Calu3 (cell line): ENCODE measurements at regions of chr5 and their contacts with region 1.

Region 1: DNA sequence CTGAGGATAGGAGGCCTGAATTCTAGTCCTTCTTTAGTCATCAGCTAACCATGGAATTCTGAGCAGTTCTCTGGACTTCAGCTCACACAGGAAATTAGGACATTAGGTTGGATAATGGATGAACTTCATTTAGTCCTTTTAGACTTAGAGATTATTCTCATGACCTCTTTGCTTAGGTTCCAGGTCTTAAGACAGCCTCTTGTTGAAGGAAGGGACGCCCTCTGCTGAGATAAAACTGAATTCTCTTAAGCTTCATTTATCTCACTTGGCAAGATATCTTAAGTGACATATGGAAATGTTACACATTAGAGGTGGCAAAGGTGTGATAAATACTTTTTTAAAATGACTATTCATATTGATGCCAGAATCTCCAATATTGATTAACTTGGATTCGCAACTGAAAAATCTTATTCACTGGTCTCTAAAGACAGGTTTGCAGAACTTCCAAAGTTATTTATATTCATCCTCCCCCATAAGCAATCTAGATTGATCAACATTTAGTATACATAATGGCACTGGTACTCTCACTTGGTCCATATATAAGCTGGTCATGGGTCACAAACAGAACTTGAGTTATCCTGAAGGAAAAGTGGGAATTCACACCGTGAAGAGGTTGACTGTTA is 16.9 kb upstream of the ZNF366 start:
- DNase-seq: peak; percentile 13
- H3K4me3 Mint-ChIP-seq: no peak overlapping the region
- H3K27ac Mint-ChIP-seq: no peak overlapping the region
- H3K4me1 Mint-ChIP-seq: no peaks in the 10 kb centered on the region
- H3K27me3 Mint-ChIP-seq: no peaks in the 10 kb centered on the region
- CTCF ChIP-seq: peak; percentile 25

Region 2: GRCh38 chr5:72366324-72366976 is 157.6 kb before region 1 on chr5:
- CTCF ChIA-PET with region 1: interaction called, 24 read pairs
- intact Hi-C with region 1: loop called (anchors 1 kb)
- DNase-seq: peak; percentile 67
- H3K4me3 Mint-ChIP-seq: no peak overlapping the region
- H3K27ac Mint-ChIP-seq: no peak overlapping the region
- H3K4me1 Mint-ChIP-seq: peaks cover 9% of the 10 kb centered on the region
- H3K27me3 Mint-ChIP-seq: no peaks in the 10 kb centered on the region
- CTCF ChIP-seq: no peak

Region 3: DNA sequence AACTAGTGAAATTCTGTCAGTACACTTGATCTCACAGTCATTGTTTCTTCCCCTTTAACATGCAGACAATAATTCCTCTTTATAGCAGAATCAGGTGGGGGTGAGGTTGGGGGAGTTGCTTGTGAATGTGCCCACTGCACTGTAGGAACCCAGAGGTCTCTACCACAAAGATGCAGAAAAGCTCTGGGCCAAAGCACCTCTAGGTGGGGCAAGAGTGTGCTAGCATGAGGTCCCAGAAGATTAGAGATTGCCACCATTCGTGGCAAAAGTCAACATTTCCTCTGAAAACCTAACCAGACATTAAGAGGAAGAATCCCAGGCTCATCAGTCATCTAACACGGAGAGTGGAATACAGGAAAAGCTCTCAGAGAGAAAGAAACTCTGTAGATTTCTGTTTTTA is 129.4 kb before region 1 on chr5:
- CTCF ChIA-PET with region 1: no interaction called
- intact Hi-C with region 1: loop called (anchors 10 kb)
- DNase-seq: peak; percentile 15
- H3K4me3 Mint-ChIP-seq: no peak overlapping the region
- H3K27ac Mint-ChIP-seq: no peak overlapping the region
- H3K4me1 Mint-ChIP-seq: no peaks in the 10 kb centered on the region
- H3K27me3 Mint-ChIP-seq: peaks cover 20% of the 10 kb centered on the region
- CTCF ChIP-seq: peak; percentile 15